Thyroid gland (tissue), 4 donors: ENCODE measurements at regions of chrX and their contacts with region 1.

Region 1: DNA sequence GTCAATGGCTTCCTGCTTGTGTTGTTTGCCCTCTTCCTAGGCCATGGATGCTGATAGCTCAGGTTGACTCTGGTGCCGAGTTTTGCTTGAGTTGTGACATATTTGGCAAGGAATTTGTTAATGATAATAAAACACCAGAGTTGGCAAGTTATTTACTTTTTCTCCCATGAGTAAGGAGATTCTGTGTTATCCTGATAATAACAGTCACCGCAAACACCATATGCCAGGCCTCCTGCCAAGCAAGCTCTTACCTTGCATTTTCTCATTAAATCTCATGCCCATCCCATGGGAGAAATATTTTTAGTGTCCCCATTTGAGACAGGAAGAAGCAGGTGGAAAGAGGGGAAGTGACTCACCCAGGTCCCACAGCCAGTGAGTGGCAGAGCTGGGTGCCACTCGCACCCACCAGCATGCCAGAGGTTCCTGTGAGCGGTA is 67.4 kb upstream of the CLCN4 start:
- DNase-seq: no peak
- H3K4me3 ChIP-seq: no peak overlapping the region
- H3K27ac ChIP-seq: peak overlapping the region; percentile 18 to 51 (median 46)
- H3K4me1 ChIP-seq: peaks cover 7 to 14% of the 10 kb centered on the region in 2 donors
- H3K27me3 ChIP-seq: no peaks in the 10 kb centered on the region
- CTCF ChIP-seq: no peak
- POLR2A ChIP-seq: no peak

Region 2: DNA sequence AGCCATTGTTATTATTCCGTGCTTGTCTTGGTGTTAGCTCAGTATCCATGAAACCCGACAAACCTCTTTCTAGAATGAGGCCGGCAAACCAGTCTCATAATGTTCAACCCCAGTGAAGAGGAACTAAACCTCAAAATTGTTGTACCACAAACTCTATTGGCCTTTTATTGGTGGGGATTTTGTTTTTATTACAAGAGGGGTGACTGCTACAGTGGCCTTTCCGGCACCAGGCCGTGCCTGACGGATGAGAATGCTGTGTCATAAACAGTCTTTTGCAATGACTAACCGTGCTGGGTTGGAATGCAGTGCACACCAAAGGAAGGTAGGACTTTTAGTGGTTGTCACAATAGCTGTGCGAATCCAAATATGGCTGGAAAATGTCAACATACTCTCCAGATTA is 242.3 kb before region 1 on chrX:
- intact Hi-C with region 1: no loop called
- DNase-seq: no peak
- H3K4me3 ChIP-seq: no peak overlapping the region
- H3K27ac ChIP-seq: no peak overlapping the region
- H3K4me1 ChIP-seq: no peaks in the 10 kb centered on the region
- H3K27me3 ChIP-seq: no peaks in the 10 kb centered on the region
- CTCF ChIP-seq: no peak
- POLR2A ChIP-seq: no peak

Region 3: DNA sequence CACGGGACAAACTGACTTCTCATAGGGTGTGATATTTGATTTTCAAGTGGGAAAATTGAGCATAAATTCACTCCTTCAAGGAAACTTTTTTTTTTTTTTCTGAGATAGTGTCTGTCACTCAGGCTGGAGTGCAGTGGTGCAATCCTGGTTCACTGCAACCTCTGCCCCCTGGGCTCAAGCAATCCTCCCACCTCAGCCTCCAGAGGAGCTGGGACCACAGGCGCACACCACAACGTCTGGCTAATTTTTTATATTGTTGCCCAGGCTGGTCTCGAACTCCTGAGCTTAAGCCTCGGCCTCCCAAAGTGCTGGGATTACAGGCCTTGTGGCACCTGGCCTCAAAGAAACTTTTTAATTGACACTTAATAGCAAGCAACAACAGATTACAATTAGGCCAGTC is 108.5 kb before region 1 on chrX:
- intact Hi-C with region 1: no loop called
- DNase-seq: no peak
- H3K4me3 ChIP-seq: no peak overlapping the region
- H3K27ac ChIP-seq: no peak overlapping the region
- H3K4me1 ChIP-seq: no peaks in the 10 kb centered on the region
- H3K27me3 ChIP-seq: no peaks in the 10 kb centered on the region
- CTCF ChIP-seq: no peak
- POLR2A ChIP-seq: no peak

Region 4: DNA sequence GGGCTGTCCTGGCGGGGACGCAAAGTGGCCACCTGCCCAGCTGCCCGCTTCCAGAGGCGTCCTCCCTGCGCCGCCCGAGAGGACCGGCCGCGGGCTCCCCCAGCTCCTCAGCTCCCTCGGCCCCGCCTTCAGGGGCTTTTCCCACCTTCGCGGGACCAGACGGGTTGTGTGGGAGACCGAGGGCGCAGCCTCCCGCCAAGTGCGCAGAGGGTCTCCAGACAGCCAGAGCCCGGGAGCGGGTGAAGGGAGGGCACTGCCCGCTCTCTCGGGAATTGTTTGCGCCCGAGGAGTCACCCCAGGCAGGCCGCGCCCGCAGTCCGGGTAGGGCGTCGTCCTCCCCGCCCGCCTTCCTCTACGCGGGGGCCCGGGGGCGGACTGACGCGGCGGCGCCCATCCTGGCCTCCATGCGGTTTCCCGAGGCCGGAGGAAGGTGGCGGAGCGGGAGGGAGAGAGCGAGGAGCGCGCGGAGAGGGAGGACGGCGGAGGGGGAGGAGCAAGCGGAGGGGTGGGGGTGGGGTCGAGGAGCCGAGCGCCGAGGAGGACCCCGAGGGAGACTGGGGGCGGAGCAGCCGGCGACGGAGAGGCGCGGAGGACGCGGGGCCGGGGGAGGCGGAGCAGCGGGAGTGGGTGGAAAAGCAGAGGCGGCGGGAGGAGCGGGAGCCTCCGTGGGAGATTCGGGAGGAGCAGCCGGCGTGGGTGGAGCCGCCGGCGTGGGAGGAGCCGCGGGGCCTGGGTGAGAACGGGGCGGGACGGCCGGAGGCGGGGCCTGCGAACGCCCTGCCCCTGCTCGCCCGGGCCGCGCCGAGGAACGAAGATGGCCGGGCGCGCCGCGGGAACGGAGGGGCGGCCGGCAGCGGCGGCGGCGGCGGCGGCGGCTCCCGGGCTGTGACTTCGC is 74.7 kb before region 1 on chrX:
- intact Hi-C with region 1: loop called (anchors 10 kb)
- DNase-seq: peak; percentile 86 to 88
- H3K4me3 ChIP-seq: peak overlapping the region; percentile 39 to 47 (median 40)
- H3K27ac ChIP-seq: peak overlapping the region; percentile 42 to 79 (median 70)
- H3K4me1 ChIP-seq: peaks cover 0 to 13% of the 10 kb centered on the region in 2 donors
- H3K27me3 ChIP-seq: no peaks in the 10 kb centered on the region
- CTCF ChIP-seq: no peak
- POLR2A ChIP-seq: peak in 1 of 2 donors; percentile 91

Region 5: GRCh38 chrX:10233173-10233572 is 143.8 kb after region 1 on chrX:
- intact Hi-C with region 1: no loop called
- DNase-seq: no peak
- H3K4me3 ChIP-seq: no peak overlapping the region
- H3K27ac ChIP-seq: no peak overlapping the region
- H3K4me1 ChIP-seq: no peaks in the 10 kb centered on the region
- H3K27me3 ChIP-seq: no peaks in the 10 kb centered on the region
- CTCF ChIP-seq: no peak
- POLR2A ChIP-seq: no peak